Gastrocnemius medialis (tissue), 4 donors: ENCODE measurements at regions of chr11 and their contacts with region 1.

Region 1: GRCh38 chr11:99987821-99988470 is 699.1 kb upstream of the ARHGAP42 start:
- DNase-seq: no peak
- ATAC-seq: no peak
- H3K4me3 ChIP-seq: no peak overlapping the region
- H3K27ac ChIP-seq: no peak overlapping the region
- H3K4me1 ChIP-seq: no peaks in the 10 kb centered on the region
- H3K27me3 ChIP-seq: no peaks in the 10 kb centered on the region
- CTCF ChIP-seq: no peak
- POLR2A ChIP-seq: no peak

Region 2: DNA sequence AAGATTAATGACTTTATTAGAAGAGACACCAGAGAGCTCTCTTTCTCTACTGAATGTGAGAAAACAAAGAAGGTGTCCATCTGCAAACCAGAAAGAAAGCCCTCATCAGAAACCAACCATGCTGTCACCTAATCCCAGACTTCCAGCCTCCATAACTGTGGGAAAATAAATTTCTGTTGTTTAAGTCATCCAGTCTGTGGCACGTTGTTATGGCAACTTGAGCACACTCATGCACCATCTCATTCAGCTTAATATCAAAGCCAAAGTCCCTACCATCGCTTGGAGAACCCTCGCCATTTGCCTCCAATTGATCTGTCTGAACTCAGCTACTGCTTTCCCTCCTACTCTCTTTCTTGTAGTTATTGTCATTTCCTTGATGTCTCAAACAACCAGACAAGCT is 67.0 kb before region 1 on chr11:
- in situ Hi-C with region 1: loop called in 1 of 4 experiments (anchors 10 kb)
- intact Hi-C with region 1: no loop called
- DNase-seq: no peak
- ATAC-seq: no peak
- H3K4me3 ChIP-seq: no peak overlapping the region
- H3K27ac ChIP-seq: no peak overlapping the region
- H3K4me1 ChIP-seq: no peaks in the 10 kb centered on the region
- H3K27me3 ChIP-seq: no peaks in the 10 kb centered on the region
- CTCF ChIP-seq: no peak
- POLR2A ChIP-seq: no peak